ENCODE measurements at regions of chr1 and their contacts with region 1.

Region 1: GRCh38 chr1:145957443-145958319 is at the start of gene LIX1L:
- DNase-seq: peak; percentile 87 to 98 (median 93)
- ATAC-seq: peak; percentile 86
- H3K4me3 ChIP-seq: peak within 1 kb of the TSS; percentile 83
- H3K4me3 Mint-ChIP-seq: peak within 1 kb of the TSS; percentile 96
- H3K27ac ChIP-seq: peak within 1 kb of the TSS; percentile 75 to 76
- H3K27ac Mint-ChIP-seq: peak within 1 kb of the TSS; percentile 87
- H3K4me1 ChIP-seq: peaks cover 66% of the 10 kb centered on the region
- H3K4me1 Mint-ChIP-seq: peaks cover 76% of the 10 kb centered on the region
- H3K27me3 ChIP-seq: no peaks in the 10 kb centered on the region
- H3K27me3 Mint-ChIP-seq: no peaks in the 10 kb centered on the region
- CTCF ChIP-seq: no peak
- total RNA-seq, gene LIX1L: 21.4 to 21.5 TPM

Region 2: DNA sequence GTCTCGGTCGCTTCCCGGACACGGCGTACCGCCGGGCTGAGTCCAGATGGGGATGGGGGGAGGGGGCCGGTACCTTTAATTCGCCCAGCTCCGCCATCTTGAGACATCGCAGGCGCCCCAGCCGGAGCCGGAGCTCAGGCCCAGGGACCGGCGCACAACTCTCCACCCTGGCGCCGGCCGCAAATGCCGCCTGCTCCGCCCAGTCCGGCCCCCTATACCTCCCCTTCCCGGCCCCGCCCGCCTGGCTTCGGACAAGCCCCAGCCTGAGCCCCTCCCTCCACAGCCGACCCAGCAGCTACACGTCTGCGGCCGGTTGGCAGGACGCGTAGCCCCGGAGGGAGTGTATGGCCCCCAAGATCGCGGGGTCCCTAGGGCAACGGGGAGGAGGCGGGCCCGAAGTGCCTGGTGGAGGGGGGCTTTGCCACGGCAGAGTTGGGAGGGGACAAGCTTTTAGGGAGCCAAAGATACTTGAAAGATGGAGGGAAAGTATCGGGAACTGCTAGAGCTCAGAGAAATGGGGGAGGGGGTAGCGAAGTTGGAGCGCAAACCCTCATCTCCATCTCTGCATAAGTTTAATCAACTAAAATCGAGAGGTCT is 98.7 kb before region 1 on chr1 and contains the start of gene PIAS3:
- CTCF ChIA-PET with region 1: no interaction called
- POLR2A ChIA-PET with region 1: interaction called, 44 read pairs
- intact Hi-C with region 1: loop called in 1 of 2 experiments (anchors 2 kb)
- DNase-seq: peak; percentile 61 to 90 (median 75)
- ATAC-seq: peak; percentile 79
- H3K4me3 ChIP-seq: peak within 1 kb of the TSS; percentile 75
- H3K4me3 Mint-ChIP-seq: peak within 1 kb of the TSS; percentile 98
- H3K27ac ChIP-seq: peak within 1 kb of the TSS; percentile 32 to 67
- H3K27ac Mint-ChIP-seq: peak within 1 kb of the TSS; percentile 85
- H3K4me1 ChIP-seq: peaks cover 22% of the 10 kb centered on the region
- H3K4me1 Mint-ChIP-seq: peaks cover 20% of the 10 kb centered on the region
- H3K27me3 ChIP-seq: no peaks in the 10 kb centered on the region
- H3K27me3 Mint-ChIP-seq: no peaks in the 10 kb centered on the region
- CTCF ChIP-seq: no peak
- total RNA-seq, gene PIAS3: 18.7 to 19.7 TPM

Region 3: GRCh38 chr1:145908653-145909052 is 49.0 kb before region 1 on chr1:
- CTCF ChIA-PET with region 1: no interaction called
- POLR2A ChIA-PET with region 1: no interaction called
- intact Hi-C with region 1: no loop called
- DNase-seq: no peak
- ATAC-seq: no peak
- H3K4me3 ChIP-seq: no peak overlapping the region
- H3K4me3 Mint-ChIP-seq: no peak overlapping the region
- H3K27ac ChIP-seq: no peak overlapping the region
- H3K27ac Mint-ChIP-seq: no peak overlapping the region
- H3K4me1 ChIP-seq: peaks cover 3% of the 10 kb centered on the region
- H3K4me1 Mint-ChIP-seq: peaks cover 6% of the 10 kb centered on the region
- H3K27me3 ChIP-seq: no peaks in the 10 kb centered on the region
- H3K27me3 Mint-ChIP-seq: no peaks in the 10 kb centered on the region
- CTCF ChIP-seq: no peak

Region 4: DNA sequence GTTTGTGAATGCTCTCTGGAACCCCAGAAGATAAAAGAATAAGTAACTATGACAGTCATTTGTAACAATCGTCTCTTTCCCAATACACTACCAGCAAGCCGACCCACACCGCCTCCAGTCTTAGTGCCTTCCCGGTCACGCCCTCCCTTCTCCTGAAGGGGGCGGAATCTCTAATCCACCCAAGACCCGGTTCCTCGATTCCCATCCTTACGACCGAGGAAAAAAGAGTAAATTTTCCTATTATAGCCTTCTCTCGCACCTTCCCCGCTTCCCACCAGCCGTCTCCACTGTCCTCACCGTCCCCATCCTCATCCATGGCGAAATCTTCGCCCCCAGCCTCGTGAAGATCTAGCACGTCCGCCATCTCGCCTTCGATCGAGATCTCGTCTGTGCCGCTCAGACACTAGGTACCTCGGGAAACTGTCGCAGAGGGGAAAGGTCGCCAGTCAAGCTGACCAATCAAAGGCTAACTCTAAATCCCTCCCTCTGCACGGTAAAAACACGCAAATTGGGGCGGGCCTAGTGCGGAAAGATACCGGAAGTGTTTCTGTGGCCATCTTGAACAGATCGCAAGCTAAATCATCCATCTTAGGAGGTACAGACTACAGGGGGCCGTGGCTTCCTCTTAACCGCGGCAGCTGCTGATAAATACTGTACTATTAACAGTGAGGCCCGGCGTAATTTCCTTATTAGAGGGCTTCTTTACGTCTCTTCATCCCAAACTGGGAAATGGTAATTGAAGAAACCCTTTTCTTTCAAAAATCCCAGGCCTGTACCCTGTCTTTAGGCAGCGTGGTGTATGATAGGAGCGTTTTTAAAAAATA is 30.4 kb before region 1 on chr1 and contains the start of gene RBM8A:
- CTCF ChIA-PET with region 1: interaction called, 40 read pairs
- POLR2A ChIA-PET with region 1: interaction called, 213 read pairs
- intact Hi-C with region 1: loop called (anchors 1 kb)
- DNase-seq: peak; percentile 87 to 99 (median 90)
- ATAC-seq: peak; percentile 96
- H3K4me3 ChIP-seq: peak within 1 kb of the TSS; percentile 95
- H3K4me3 Mint-ChIP-seq: no peak within 1 kb of the TSS
- H3K27ac ChIP-seq: peak within 1 kb of the TSS; percentile 93 to 98
- H3K27ac Mint-ChIP-seq: no peak within 1 kb of the TSS
- H3K4me1 ChIP-seq: peaks cover 37% of the 10 kb centered on the region
- H3K4me1 Mint-ChIP-seq: peaks cover 21% of the 10 kb centered on the region
- H3K27me3 ChIP-seq: no peaks in the 10 kb centered on the region
- H3K27me3 Mint-ChIP-seq: no peaks in the 10 kb centered on the region
- CTCF ChIP-seq: peak; percentile 81
- total RNA-seq, gene RBM8A: 126 to 134 TPM

Region 5: GRCh38 chr1:145942405-145942804 is 15.3 kb before region 1 on chr1:
- CTCF ChIA-PET with region 1: no interaction called
- POLR2A ChIA-PET with region 1: interaction called, 16 read pairs
- intact Hi-C with region 1: no loop called
- DNase-seq: no peak
- ATAC-seq: no peak
- H3K4me3 ChIP-seq: no peak overlapping the region
- H3K4me3 Mint-ChIP-seq: no peak overlapping the region
- H3K27ac ChIP-seq: no peak overlapping the region
- H3K27ac Mint-ChIP-seq: no peak overlapping the region
- H3K4me1 ChIP-seq: no peaks in the 10 kb centered on the region
- H3K4me1 Mint-ChIP-seq: peaks cover 11% of the 10 kb centered on the region
- H3K27me3 ChIP-seq: no peaks in the 10 kb centered on the region
- H3K27me3 Mint-ChIP-seq: no peaks in the 10 kb centered on the region
- CTCF ChIP-seq: no peak

Region 6: DNA sequence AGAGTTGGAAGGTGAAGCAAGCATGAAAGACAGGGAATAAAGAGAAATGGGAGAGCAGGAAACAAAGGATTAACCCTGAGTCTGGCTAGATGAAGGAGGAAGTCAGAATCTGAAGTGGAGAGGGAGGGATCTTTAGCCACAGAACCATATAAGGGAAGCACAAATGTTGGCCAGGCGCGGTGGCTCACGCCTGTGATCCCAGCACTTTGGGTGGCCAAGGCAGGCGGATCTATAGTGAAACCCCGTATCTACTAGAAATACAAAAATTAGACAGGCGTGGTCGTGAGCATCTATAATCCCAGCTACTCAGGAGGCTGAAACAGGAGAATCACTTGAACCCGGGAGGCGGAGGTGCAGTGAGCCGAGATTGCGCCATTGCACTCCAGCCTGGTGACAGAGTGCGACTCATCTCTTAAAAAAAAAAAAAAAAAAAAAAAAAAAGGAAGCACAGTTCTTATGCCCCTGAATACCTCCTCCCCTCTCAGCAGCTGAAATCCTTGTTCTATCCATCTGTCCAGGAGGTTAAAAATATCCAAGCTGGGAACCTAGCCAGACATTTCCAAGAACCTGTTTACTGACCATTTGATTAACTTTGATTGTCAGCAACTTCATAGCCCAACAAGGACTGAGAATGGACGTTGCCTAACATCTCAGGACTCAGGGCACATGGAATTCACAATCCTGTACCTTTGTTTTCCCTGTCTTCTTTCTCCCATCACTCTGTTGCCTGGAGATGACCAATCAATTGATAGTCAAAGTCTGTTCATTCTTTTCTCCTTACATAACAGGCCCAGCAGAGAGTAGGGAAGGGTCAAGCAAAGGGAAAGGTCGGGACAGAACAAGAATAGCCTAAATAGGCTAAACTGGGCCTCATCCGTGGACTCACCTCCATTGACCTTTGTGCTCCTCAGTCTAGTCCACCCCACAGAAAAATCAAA is 28.1 kb after region 1 on chr1:
- CTCF ChIA-PET with region 1: no interaction called
- POLR2A ChIA-PET with region 1: interaction called, 115 read pairs
- intact Hi-C with region 1: no loop called
- DNase-seq: peak in 2 of 14 experiments; percentile 37 to 42
- ATAC-seq: no peak
- H3K4me3 ChIP-seq: no peak overlapping the region
- H3K4me3 Mint-ChIP-seq: peak overlapping the region; percentile 35
- H3K27ac ChIP-seq: peak overlapping the region; percentile 42 to 45
- H3K27ac Mint-ChIP-seq: no peak overlapping the region
- H3K4me1 ChIP-seq: peaks cover 83% of the 10 kb centered on the region
- H3K4me1 Mint-ChIP-seq: peaks cover 25% of the 10 kb centered on the region
- H3K27me3 ChIP-seq: no peaks in the 10 kb centered on the region
- H3K27me3 Mint-ChIP-seq: no peaks in the 10 kb centered on the region
- CTCF ChIP-seq: no peak

Region 7: DNA sequence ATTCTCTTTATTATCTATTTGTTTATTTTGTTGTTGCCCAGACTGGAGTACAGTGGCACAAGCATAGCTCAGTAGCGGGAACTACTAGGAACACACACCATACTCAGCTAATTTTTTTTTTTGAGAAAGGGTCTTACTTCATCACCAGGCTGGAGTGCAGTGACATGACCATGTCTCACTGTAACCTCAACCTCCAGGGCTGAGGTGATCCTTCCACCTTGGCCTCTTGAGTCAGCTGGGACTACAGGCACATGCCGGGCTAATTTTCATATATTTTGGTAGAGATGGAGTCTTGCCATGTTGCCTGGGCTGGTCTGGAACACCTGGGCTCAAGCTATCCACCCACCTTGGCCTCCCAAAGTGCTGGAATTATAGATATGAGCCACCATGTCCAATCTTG is 44.0 kb after region 1 on chr1:
- CTCF ChIA-PET with region 1: interaction called, 21 read pairs
- POLR2A ChIA-PET with region 1: interaction called, 115 read pairs
- intact Hi-C with region 1: loop called in 1 of 2 experiments (anchors 5 kb)
- DNase-seq: no peak
- ATAC-seq: no peak
- H3K4me3 ChIP-seq: no peak overlapping the region
- H3K4me3 Mint-ChIP-seq: peak overlapping the region; percentile 72
- H3K27ac ChIP-seq: peak overlapping the region; percentile 41 to 63
- H3K27ac Mint-ChIP-seq: peak overlapping the region; percentile 95
- H3K4me1 ChIP-seq: peaks cover 86% of the 10 kb centered on the region
- H3K4me1 Mint-ChIP-seq: peaks cover 75% of the 10 kb centered on the region
- H3K27me3 ChIP-seq: no peaks in the 10 kb centered on the region
- H3K27me3 Mint-ChIP-seq: no peaks in the 10 kb centered on the region
- CTCF ChIP-seq: no peak

Region 8: GRCh38 chr1:147545133-147545532 is 1587.5 kb after region 1 on chr1:
- CTCF ChIA-PET with region 1: no interaction called
- POLR2A ChIA-PET with region 1: no interaction called
- intact Hi-C with region 1: loop called in 1 of 2 experiments (anchors 5 kb)
- DNase-seq: peak; percentile 64 to 95 (median 81)
- ATAC-seq: peak; percentile 80
- H3K4me3 ChIP-seq: no peak overlapping the region
- H3K4me3 Mint-ChIP-seq: no peak overlapping the region
- H3K27ac ChIP-seq: no peak overlapping the region
- H3K27ac Mint-ChIP-seq: no peak overlapping the region
- H3K4me1 ChIP-seq: peaks cover 56% of the 10 kb centered on the region
- H3K4me1 Mint-ChIP-seq: peaks cover 71% of the 10 kb centered on the region
- H3K27me3 ChIP-seq: no peaks in the 10 kb centered on the region
- H3K27me3 Mint-ChIP-seq: no peaks in the 10 kb centered on the region
- CTCF ChIP-seq: no peak

Measured in CD4-positive, alpha-beta T cell (primary cell).